ENCODE measurements at regions of chr11 and their contacts with region 1.

Region 1: DNA sequence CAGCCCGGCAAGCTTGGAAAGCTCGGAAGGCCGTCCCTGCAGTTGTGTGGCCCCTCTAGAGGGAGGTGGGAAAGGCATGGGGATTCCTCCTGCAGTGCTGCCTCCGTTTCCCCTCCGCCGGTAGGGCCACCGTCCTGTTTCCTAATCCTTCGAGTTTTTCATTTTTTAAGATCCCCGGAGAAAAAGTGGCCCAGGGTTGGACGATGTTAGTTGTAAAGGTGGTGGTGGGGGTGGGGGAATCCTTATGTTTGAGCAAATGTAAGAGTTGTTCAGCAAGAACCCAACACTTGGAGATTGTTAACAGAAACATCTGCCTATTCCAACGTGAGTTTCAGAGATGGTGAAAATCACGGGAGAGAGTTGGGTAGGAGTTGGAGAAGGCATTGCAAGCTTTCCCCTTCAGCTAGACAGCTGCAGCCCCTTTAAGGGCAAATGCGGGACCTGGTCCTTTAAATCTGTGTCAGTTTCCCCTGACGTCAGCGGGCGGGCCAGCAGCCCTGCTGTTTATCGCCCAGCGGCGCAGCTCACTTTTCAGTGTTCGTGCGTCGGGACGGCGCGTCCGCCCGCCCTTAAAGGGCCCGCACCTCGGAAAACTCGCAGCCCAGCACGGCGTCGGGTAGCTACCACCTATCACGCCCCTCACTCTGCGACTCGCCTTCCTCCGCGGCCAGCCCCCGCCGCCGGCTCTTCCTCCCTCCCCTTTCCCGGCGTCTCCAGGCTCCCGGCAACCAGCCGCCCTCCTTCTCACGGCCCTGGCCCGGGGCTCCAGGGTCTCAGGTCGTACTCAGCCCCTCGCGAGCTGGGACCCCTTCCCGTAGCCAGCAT is at the start of gene SIDT2:
- DNase-seq: peak; percentile 98
- H3K4me3 ChIP-seq: peak within 1 kb of the TSS; percentile 77 to 99 (median 88)
- H3K27ac ChIP-seq: peak within 1 kb of the TSS; percentile 92 to 99 (median 96)
- H3K4me1 ChIP-seq: peaks cover 0 to 49% (median 35%) of the 10 kb centered on the region in 4 donors
- H3K27me3 ChIP-seq: no peaks in the 10 kb centered on the region
- CTCF ChIP-seq: no peak
- EP300 ChIP-seq: peak in 2 of 4 donors; percentile 67 to 80
- POLR2A ChIP-seq: peak; percentile 89 to 95
- total RNA-seq, gene SIDT2: 20.7 to 50.7 (median 28.5) TPM

Region 2: GRCh38 chr11:117199061-117199915 is 20.9 kb after region 1 on chr11 and contains the start of gene TAGLN:
- intact Hi-C with region 1: loop called (anchors 2 kb)
- DNase-seq: peak; percentile 97
- H3K4me3 ChIP-seq: peak within 1 kb of the TSS; percentile 59 to 90 (median 86)
- H3K27ac ChIP-seq: peak within 1 kb of the TSS; percentile 90 to 99 (median 96)
- H3K4me1 ChIP-seq: peaks cover 0 to 40% (median 36%) of the 10 kb centered on the region in 4 donors
- H3K27me3 ChIP-seq: no peaks in the 10 kb centered on the region
- CTCF ChIP-seq: no peak
- EP300 ChIP-seq: peak in 2 of 4 donors; percentile 42 to 62
- POLR2A ChIP-seq: peak; percentile 86 to 97
- total RNA-seq, gene TAGLN: 6,854 to 14,048 (median 12,596) TPM

Region 3: GRCh38 chr11:117232092-117232878 is 53.9 kb after region 1 on chr11 and contains the start of gene RNF214:
- intact Hi-C with region 1: loop called (anchors 2 kb)
- DNase-seq: peak; percentile 86
- H3K4me3 ChIP-seq: peak within 1 kb of the TSS; percentile 79 to 98 (median 92)
- H3K27ac ChIP-seq: peak within 1 kb of the TSS; percentile 95 to 99 (median 96)
- H3K4me1 ChIP-seq: peaks cover 2 to 38% (median 32%) of the 10 kb centered on the region in 4 donors
- H3K27me3 ChIP-seq: no peaks in the 10 kb centered on the region
- CTCF ChIP-seq: peak; percentile 80 to 94 (median 84)
- EP300 ChIP-seq: no peak
- POLR2A ChIP-seq: peak; percentile 39 to 57
- total RNA-seq, gene RNF214: 11.1 to 23.8 (median 12.8) TPM

Measured in sigmoid colon (tissue), 7 donors.